AG04449 (cell line): ENCODE measurements at regions of chr2 and their contacts with region 1.

Region 1: GRCh38 chr2:112726497-112727190 is 5.8 kb downstream of the NT5DC4 start:
- DNase-seq: peak; percentile 55
- H3K4me3 ChIP-seq: no peak overlapping the region
- CTCF ChIP-seq: peak; percentile 98

Region 2: DNA sequence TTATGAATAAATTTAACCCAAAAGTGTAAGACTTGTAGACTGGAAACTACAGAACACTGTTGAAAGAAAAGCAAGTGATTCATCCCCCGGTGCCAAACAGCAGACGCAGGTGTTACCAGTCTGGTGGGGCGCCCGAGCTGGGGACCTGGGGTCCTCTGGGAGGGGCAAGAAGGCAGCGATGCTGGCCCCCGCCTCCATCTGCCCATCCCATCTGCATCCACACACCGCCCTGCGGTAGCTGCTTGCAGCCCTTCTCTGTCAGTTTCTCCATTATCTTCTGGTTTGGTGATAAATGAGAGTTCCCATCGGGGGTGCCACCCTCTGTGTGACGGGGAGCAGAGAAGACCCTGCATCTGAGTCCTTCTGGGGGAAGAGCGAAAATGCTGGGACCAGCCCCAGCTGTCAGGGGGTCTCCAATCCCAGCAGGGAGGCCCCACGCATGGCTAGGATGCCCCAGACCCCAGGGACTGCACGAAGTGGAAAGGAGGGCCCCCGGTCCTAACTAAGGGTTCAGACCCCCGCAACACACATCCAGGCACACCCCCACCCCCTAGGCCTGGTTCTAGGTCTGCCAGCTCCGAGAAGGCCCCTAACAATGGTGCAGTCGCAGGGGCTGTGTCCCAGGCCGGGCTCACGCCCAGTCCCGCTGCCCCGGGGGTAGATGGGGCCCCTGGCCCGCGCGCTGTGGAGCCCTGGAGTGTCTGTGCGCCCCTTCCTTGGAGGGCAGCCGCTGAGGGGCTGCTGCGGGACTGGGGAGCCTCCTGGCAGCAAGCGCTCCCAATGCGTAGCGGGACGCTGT is 292.5 kb before region 1 on chr2:
- CTCF ChIA-PET with region 1: no interaction called
- POLR2A ChIA-PET with region 1: no interaction called
- DNase-seq: no peak
- H3K4me3 ChIP-seq: no peak overlapping the region
- CTCF ChIP-seq: no peak

Region 3: GRCh38 chr2:112481050-112481527 is 245.6 kb before region 1 on chr2:
- CTCF ChIA-PET with region 1: interaction called, 12 read pairs
- POLR2A ChIA-PET with region 1: no interaction called
- DNase-seq: no peak
- H3K4me3 ChIP-seq: peak overlapping the region; percentile 83
- CTCF ChIP-seq: peak; percentile 92

Region 4: GRCh38 chr2:112606488-112606902 is 120.1 kb before region 1 on chr2:
- CTCF ChIA-PET with region 1: interaction called, 410 read pairs
- POLR2A ChIA-PET with region 1: no interaction called
- DNase-seq: no peak
- H3K4me3 ChIP-seq: no peak overlapping the region
- CTCF ChIP-seq: no peak

Region 5: GRCh38 chr2:112645310-112646101 is 81.1 kb before region 1 on chr2 and contains the start of gene SLC20A1:
- CTCF ChIA-PET with region 1: interaction called, 14 read pairs
- POLR2A ChIA-PET with region 1: no interaction called
- DNase-seq: no peak
- H3K4me3 ChIP-seq: peak within 1 kb of the TSS; percentile 88
- CTCF ChIP-seq: peak; percentile 40

Region 6: DNA sequence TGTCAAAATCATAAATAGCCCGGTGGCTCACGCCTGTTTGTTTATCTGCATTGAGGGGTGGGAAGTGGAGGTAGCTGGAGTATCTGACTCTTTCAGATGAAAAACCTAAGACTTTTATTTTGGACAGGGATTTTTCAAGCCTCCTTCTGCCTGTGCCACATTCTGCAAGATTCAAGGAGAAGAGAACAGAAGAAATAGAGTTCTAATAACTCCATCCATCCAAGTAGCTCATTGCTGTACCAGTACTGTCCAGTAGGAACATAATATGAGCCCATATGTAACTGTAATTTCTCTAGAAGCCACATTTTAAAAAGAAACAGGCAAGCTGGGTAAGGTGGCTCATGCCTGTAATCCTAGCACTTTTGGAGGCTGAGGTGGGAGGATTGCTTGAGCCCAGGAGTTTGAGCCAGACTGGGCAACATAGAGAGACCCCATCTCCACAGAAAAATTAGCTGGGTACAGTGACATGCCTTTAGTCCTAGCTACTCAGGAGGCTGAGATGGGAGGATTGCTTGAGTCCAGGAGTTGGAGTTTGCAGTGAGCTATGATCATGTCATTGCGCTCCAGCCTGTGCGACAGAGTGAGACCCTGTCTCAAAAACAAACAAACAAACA is 41.3 kb before region 1 on chr2:
- CTCF ChIA-PET with region 1: interaction called, 10 read pairs
- POLR2A ChIA-PET with region 1: no interaction called
- DNase-seq: no peak
- H3K4me3 ChIP-seq: no peak overlapping the region
- CTCF ChIP-seq: no peak

Region 7: DNA sequence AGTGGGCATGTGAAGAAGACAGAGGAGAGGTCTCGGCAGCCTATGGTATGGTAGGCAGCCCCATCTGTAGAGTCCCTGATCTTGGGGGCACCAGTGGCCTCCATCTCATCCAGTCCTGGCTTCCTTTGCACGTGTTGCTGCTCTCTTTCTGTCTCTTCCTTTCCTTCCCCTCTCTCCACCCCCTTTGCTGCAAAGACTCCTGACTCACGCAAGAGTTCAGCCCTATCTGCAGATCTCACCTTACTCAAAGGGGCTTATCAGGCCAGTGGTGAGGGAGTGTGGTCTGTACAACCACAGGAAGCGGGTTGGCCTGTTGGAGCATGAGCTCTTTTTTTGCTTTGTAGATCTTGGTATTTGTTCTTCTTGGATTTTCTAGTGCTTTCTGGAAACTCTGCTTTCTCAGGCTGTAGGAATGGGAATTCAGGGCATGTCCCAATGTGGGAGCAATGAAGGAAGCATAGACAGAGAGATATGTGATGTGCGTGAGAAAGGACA is 20.4 kb before region 1 on chr2:
- CTCF ChIA-PET with region 1: interaction called, 36 read pairs
- POLR2A ChIA-PET with region 1: no interaction called
- DNase-seq: no peak
- H3K4me3 ChIP-seq: no peak overlapping the region
- CTCF ChIP-seq: no peak

Region 8: GRCh38 chr2:112749755-112750559 is 23.3 kb after region 1 on chr2:
- CTCF ChIA-PET with region 1: interaction called, 51 read pairs
- POLR2A ChIA-PET with region 1: no interaction called
- DNase-seq: peak; percentile 21
- H3K4me3 ChIP-seq: no peak overlapping the region
- CTCF ChIP-seq: peak; percentile 99

Region 9: GRCh38 chr2:112764071-112765044 is 37.7 kb after region 1 on chr2 and contains the start of gene CKAP2L:
- CTCF ChIA-PET with region 1: no interaction called
- POLR2A ChIA-PET with region 1: no interaction called
- DNase-seq: peak; percentile 83
- H3K4me3 ChIP-seq: peak within 1 kb of the TSS; percentile 88
- CTCF ChIP-seq: no peak